ENCODE measurements at regions of chr16 and their contacts with region 1.

Region 1: GRCh38 chr16:30407102-30407803 is at the start of gene ZNF771:
- DNase-seq: peak; percentile 83 to 90
- ATAC-seq: peak; percentile 88 to 92
- H3K4me3 ChIP-seq: peak within 1 kb of the TSS; percentile 62
- H3K27ac ChIP-seq: peak within 1 kb of the TSS; percentile 80 to 92
- H3K4me1 ChIP-seq: peaks cover 20% of the 10 kb centered on the region
- CTCF ChIP-seq: no peak
- EP300 ChIP-seq: no peak
- POLR2A ChIP-seq: peak; percentile 69
- RAD21 ChIP-seq: no peak
- polyA plus RNA-seq, gene ZNF771: 5.0 and 5.7 TPM in 2 replicates

Region 2: GRCh38 chr16:30032083-30032819 is 375.0 kb before region 1 on chr16:
- CTCF ChIA-PET with region 1: no interaction called
- POLR2A ChIA-PET with region 1: no interaction called
- DNase-seq: peak in 1 of 2 experiments; percentile 79
- ATAC-seq: peak in 1 of 2 experiments; percentile 75; a peak in 3 of 6 replicates
- H3K4me3 ChIP-seq: no peak overlapping the region
- H3K27ac ChIP-seq: no peak overlapping the region
- H3K4me1 ChIP-seq: 0 out of 3 replicates have a peak, but pooled peaks cover 7% of the 10 kb centered on the region
- CTCF ChIP-seq: peak; percentile 91
- EP300 ChIP-seq: no peak
- POLR2A ChIP-seq: no peak
- RAD21 ChIP-seq: peak; percentile 91 to 94

Region 3: DNA sequence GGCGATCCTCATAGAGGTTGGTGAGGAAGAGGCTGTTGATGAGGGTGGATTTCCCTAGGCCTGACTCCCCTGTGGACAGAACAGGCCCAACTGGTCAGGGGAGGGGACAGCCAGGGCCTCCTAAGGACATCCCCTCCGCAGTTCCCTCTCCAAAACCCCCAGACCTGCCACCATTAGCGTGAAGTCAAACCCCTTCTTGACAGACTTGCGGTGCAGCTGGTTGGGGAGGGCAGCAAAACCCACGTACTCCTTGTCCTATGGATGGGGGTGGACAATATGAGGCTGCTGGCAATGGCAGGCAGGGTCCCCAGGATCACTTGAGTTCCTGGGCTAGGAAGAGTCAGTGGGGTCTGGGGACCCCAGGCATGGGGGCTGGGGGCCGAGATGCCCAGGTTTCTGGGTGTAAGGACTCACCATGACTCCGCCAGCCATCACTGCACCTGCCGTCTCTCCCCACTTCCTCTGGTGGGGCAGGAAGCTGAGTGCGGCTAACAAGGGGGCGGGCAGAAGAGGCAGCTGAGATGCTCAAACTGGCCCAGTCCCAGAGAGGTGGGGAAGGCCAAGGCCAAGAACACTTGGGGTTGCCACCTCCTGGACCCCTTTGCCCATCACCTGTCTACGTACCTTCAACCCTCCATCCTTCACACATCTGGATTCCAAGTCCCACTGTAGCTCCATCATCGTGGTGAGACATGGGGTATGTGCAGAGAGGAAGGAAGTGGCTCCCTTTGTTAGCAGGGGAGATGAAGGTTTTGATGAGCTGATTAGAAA is 25.0 kb before region 1 on chr16 and contains the start of gene SEPTIN1:
- CTCF ChIA-PET with region 1: interaction called, 26 read pairs
- POLR2A ChIA-PET with region 1: interaction called, 6 read pairs
- DNase-seq: no peak
- ATAC-seq: no peak
- H3K4me3 ChIP-seq: no peak within 1 kb of the TSS
- H3K27ac ChIP-seq: no peak within 1 kb of the TSS
- H3K4me1 ChIP-seq: peaks cover 7% of the 10 kb centered on the region
- CTCF ChIP-seq: no peak
- EP300 ChIP-seq: no peak
- POLR2A ChIP-seq: peak; percentile 20; the same call in 1 of the 2 replicates
- RAD21 ChIP-seq: no peak
- polyA plus RNA-seq, gene SEPTIN1: 0.13 and 0.17 TPM in 2 replicates

Region 4: DNA sequence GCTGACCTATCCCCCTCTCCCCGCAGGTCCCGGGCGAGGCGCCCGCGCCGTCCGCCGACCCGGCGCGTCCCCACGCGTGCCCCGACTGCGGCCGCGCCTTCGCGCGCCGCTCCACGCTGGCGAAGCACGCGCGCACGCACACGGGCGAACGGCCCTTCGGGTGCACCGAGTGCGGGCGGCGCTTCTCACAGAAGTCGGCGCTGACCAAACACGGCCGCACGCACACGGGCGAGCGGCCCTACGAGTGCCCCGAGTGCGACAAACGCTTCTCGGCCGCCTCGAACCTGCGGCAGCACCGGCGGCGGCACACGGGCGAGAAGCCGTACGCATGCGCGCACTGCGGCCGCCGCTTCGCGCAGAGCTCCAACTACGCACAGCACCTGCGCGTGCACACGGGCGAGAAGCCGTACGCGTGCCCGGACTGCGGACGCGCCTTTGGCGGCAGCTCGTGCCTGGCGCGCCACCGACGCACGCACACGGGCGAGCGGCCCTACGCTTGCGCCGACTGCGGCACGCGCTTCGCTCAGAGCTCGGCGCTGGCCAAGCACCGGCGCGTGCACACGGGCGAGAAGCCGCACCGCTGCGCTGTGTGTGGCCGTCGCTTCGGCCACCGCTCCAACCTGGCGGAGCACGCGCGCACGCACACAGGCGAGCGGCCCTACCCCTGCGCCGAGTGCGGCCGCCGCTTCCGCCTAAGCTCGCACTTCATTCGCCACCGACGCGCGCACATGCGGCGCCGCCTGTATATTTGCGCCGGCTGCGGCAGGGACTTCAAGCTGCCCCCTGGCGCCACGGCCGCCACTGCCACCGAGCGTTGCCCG is 10.5 kb after region 1 on chr16:
- CTCF ChIA-PET with region 1: interaction called, 149 read pairs
- POLR2A ChIA-PET with region 1: interaction called, 16 read pairs
- DNase-seq: peak; percentile 80 to 98
- ATAC-seq: peak; percentile 90 to 94
- H3K4me3 ChIP-seq: peak overlapping the region; percentile 66
- H3K27ac ChIP-seq: peak overlapping the region; percentile 89 to 91
- H3K4me1 ChIP-seq: peaks cover 20% of the 10 kb centered on the region; the same call in 2 of the 3 replicates
- CTCF ChIP-seq: peak; percentile 34; the same call in 1 of the 3 replicates
- EP300 ChIP-seq: no peak
- POLR2A ChIP-seq: peak; percentile 26
- RAD21 ChIP-seq: peak; percentile 8 to 26; a peak in 2 of 5 replicates

Measured in A549 (cell line).